T-cell (primary cell): ENCODE measurements at regions of chr13 and their contacts with region 1.

Region 1: GRCh38 chr13:40243982-40244381 is 422.5 kb downstream of the FOXO1 start:
- DNase-seq: no peak
- ATAC-seq: no peak
- H3K4me3 ChIP-seq: no peak overlapping the region
- H3K4me3 Mint-ChIP-seq: no peak overlapping the region
- H3K27ac ChIP-seq: no peak overlapping the region
- H3K27ac Mint-ChIP-seq: no peak overlapping the region
- H3K4me1 ChIP-seq: no peaks in the 10 kb centered on the region
- H3K4me1 Mint-ChIP-seq: peaks cover 4 to 13% (median 4%) of the 10 kb centered on the region in 3 donors
- H3K27me3 ChIP-seq: no peaks in the 10 kb centered on the region
- H3K27me3 Mint-ChIP-seq: no peaks in the 10 kb centered on the region

Region 2: DNA sequence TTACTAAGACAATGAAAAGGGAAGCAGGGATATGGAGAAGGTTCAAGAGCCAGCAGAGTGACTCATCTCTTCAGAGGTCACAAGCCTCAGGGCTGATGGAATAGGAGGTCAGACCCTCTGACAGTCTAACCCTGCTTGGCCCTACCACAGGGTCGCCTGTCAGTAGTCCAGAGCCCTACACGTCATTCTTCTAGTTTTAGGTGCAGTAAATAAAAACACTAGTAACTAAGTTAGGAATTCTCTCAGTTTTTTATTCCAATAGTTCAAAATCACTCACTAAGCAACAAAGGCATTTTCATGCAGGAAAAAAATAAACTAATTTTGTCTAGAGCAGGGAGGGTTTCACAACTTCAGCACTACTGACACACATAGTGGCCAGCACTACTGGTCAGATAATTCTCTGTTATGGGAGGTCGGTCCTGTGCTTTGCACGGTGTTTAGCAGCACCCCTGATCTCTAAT is 395.3 kb after region 1 on chr13:
- CTCF ChIA-PET with region 1: no interaction called
- POLR2A ChIA-PET with region 1: interaction called in 1 of 2 experiments, 17 read pairs
- DNase-seq: no peak
- ATAC-seq: no peak
- H3K4me3 ChIP-seq: no peak overlapping the region
- H3K4me3 Mint-ChIP-seq: peak overlapping the region in 2 of 3 donors; percentile 29 to 63
- H3K27ac ChIP-seq: no peak overlapping the region
- H3K27ac Mint-ChIP-seq: peak overlapping the region; percentile 62 to 75
- H3K4me1 ChIP-seq: peaks cover 29 to 58% of the 10 kb centered on the region in 2 experiments
- H3K4me1 Mint-ChIP-seq: peaks cover 87 to 91% (median 91%) of the 10 kb centered on the region in 3 donors
- H3K27me3 ChIP-seq: no peaks in the 10 kb centered on the region
- H3K27me3 Mint-ChIP-seq: no peaks in the 10 kb centered on the region